ENCODE measurements at regions of chr20 and their contacts with region 1.

Region 1: DNA sequence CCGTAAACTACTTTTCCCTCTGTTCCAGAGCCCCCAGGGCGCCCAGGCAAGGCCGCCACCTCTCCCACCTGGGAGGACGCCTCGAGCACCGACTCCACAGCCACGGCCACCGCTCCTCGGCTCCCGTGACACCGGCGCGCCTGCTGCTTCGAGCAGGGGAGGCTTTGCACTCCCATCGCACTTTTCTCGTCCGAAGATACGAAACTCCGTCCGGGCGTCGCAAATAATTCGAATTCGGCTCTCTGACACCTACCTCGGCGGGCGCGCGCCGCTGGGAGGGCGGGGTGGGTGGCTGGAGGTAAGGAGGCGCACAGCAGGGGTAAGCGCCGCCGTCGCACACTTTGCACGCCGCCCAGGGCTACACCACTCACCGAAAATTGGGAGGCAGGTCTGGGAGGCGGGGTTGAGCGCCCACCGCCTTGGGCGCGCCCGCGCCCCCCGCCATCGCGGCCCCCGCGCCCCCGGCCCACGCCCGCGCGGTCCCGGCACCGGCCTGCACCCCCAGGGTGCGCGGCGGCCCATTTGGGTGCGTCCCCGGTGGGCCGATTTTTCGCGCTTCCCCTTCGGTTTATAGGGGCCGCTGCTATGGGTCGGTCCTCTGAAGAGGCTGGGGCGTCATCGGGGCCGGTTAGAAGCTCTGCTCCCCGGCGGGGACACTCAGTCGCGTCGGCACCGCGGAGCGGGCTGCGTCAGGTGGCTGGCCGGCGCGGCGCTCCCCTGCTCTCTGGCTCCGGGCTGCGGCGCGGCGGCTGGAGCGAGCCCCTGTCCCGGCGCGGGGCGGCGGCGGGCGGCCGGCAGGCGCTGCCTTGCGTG is 36.2 kb downstream of the GNAS start:
- DNase-seq: no peak
- H3K4me3 ChIP-seq: peak overlapping the region; percentile 88 to 95 (median 93)
- H3K27ac ChIP-seq: peak overlapping the region; percentile 99 to 100 (median 99)
- H3K4me1 ChIP-seq: peaks cover 9 to 26% (median 21%) of the 10 kb centered on the region in 4 donors
- H3K27me3 ChIP-seq: no peaks in the 10 kb centered on the region
- CTCF ChIP-seq: no peak
- EP300 ChIP-seq: no peak
- POLR2A ChIP-seq: peak; percentile 72

Region 2: DNA sequence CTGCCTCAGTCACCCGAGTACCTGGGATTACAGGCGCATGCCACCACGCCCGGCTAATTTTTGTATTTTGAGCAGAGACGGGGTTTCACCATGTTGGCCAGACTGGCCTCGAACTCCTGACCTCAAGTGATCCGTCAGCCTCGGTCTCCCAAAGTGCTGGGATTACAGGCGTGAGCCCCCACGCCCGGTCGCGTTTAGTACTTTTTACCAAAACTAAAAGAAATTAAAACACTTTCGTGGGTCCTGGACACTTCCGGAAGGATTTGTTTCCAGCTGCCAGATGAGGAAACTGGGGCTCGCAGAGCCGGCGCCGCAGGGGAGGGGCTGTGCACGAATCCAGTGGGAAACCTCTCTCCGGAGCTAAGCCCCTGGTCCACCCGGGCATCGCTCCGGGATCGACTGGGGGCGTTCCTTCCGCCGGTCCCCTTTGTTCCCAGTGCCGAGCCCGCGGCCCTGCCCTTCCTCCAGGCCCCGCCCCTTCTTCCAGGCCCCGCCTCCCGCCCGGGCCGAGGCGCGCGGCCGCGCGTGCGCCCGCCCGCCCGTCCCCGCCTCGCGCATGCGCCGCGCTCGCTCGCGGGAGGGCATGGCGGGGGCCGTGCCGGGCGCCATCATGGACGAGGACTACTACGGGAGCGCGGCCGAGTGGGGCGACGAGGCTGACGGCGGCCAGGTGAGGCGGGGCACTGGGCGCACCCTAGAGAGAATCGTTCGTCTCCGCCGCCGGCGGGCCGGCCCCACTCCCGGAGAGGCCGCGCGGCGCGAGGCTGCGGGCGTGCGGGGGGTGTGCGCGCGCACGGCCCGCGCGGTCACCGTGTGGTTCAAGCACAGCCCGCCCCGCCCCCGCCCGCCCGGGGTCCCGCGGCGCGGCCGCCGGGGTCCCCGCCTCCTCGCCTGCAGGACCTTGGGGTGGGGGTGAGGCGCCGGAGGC is 92.2 kb after region 1 on chr20 and contains the start of gene NELFCD:
- intact Hi-C with region 1: loop called (anchors 5 kb)
- DNase-seq: peak; percentile 94
- H3K4me3 ChIP-seq: peak within 1 kb of the TSS; percentile 73 to 97 (median 84)
- H3K27ac ChIP-seq: peak within 1 kb of the TSS; percentile 81 to 83 (median 82)
- H3K4me1 ChIP-seq: peaks cover 33 to 49% (median 47%) of the 10 kb centered on the region in 4 donors
- H3K27me3 ChIP-seq: no peaks in the 10 kb centered on the region
- CTCF ChIP-seq: no peak
- EP300 ChIP-seq: no peak
- POLR2A ChIP-seq: no peak
- total RNA-seq, gene NELFCD: 30.5 to 41.5 (median 34.9) TPM

Region 3: GRCh38 chr20:59032023-59032712 is 143.4 kb after region 1 on chr20 and contains the start of gene ATP5F1E:
- intact Hi-C with region 1: loop called (anchors 5 kb)
- DNase-seq: peak; percentile 98
- H3K4me3 ChIP-seq: peak within 1 kb of the TSS; percentile 79 to 89 (median 86)
- H3K27ac ChIP-seq: peak within 1 kb of the TSS; percentile 87 to 93 (median 90)
- H3K4me1 ChIP-seq: peaks cover 39 to 54% (median 51%) of the 10 kb centered on the region in 4 donors
- H3K27me3 ChIP-seq: no peaks in the 10 kb centered on the region
- CTCF ChIP-seq: no peak
- EP300 ChIP-seq: no peak
- POLR2A ChIP-seq: peak; percentile 95
- total RNA-seq, gene ATP5F1E: 30.8 to 44.0 (median 37.2) TPM

Region 4: DNA sequence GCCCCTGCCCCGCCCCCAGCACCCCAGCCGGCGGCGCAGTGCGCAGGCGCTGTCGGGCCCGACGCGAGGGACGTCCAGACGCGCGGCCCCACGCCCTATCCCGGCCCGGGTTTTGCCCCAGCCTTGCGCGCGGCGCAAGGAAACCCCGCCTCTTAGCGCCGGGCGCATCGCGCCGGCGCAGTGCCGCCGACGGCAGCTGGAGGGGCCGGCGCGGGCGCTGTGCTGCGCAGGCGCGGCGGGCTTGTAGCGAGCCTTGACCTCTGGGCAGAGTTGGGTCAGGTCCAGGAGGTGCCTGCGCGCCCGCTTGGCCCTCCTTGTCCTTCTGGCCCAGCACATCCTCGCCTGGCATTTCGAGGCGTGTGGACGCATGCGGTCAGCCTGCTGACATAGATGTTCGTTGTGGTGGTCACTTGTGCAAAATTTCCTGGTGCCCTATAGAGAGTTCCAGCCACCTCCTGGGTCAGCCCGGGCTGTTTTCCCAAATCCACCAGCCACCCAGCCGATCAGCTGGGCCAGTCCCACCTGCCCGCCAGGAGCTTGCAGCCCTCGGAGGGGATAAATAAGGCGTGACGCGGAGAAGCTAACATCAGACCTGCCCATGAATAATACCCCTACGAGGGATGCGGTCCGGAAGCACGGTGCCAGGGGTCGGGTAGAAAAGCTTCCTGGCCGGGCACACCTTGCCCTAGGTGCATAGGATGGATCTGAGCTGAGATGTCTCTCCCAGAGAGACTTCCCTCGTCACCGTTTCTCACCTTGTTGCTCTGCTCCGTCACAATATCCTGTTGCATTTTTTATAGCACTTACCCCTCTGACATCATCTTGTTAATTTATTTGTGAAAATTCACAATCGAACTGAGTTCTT is 154.3 kb after region 1 on chr20:
- intact Hi-C with region 1: loop called (anchors 5 kb)
- DNase-seq: peak; percentile 97
- H3K4me3 ChIP-seq: peak overlapping the region; percentile 63 to 88 (median 78)
- H3K27ac ChIP-seq: peak overlapping the region; percentile 78 to 85 (median 80)
- H3K4me1 ChIP-seq: peaks cover 32 to 41% (median 37%) of the 10 kb centered on the region in 4 donors
- H3K27me3 ChIP-seq: no peaks in the 10 kb centered on the region
- CTCF ChIP-seq: peak in 2 of 3 experiments; percentile 6 to 21
- EP300 ChIP-seq: no peak
- POLR2A ChIP-seq: no peak

Measured in esophagus muscularis mucosa (tissue), 4 donors.